WTC11 (cell line): ENCODE measurements at regions of chr2 and their contacts with region 1.

Region 1: DNA sequence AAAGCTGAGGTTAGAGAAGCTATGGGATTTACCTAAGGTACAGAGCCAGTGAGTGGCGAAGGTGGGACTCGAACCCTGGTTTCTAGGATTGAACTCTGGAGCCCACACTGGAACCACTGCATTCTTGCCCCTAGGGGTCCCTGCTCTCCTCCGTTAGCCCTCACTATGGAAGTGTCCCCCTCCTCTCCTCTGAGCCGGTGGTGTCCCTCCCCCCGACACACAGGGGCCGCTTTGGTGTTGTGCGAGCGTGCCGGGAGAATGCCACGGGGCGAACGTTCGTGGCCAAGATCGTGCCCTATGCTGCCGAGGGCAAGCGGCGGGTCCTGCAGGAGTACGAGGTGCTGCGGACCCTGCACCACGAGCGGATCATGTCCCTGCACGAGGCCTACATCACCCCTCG is 8.5 kb upstream of the GMPPA start:
- DNase-seq: peak; percentile 62
- ATAC-seq: peak; percentile 40
- H3K4me3 Mint-ChIP-seq: no peak overlapping the region
- H3K27ac Mint-ChIP-seq: no peak overlapping the region
- H3K4me1 Mint-ChIP-seq: peaks cover 39% of the 10 kb centered on the region
- H3K27me3 Mint-ChIP-seq: peaks cover 37% of the 10 kb centered on the region
- CTCF ChIP-seq: 0 out of 2 replicates have a peak, but pooled peaks have one; percentile 25

Region 2: GRCh38 chr2:219352448-219353023 is 137.7 kb before region 1 on chr2:
- CTCF ChIA-PET with region 1: no interaction called
- POLR2A ChIA-PET with region 1: no interaction called
- DNase-seq: peak; percentile 88
- ATAC-seq: peak; percentile 89
- H3K4me3 Mint-ChIP-seq: no peak overlapping the region
- H3K27ac Mint-ChIP-seq: no peak overlapping the region
- H3K4me1 Mint-ChIP-seq: no peaks in the 10 kb centered on the region
- H3K27me3 Mint-ChIP-seq: peaks cover 53% of the 10 kb centered on the region
- CTCF ChIP-seq: peak; percentile 85

Region 3: DNA sequence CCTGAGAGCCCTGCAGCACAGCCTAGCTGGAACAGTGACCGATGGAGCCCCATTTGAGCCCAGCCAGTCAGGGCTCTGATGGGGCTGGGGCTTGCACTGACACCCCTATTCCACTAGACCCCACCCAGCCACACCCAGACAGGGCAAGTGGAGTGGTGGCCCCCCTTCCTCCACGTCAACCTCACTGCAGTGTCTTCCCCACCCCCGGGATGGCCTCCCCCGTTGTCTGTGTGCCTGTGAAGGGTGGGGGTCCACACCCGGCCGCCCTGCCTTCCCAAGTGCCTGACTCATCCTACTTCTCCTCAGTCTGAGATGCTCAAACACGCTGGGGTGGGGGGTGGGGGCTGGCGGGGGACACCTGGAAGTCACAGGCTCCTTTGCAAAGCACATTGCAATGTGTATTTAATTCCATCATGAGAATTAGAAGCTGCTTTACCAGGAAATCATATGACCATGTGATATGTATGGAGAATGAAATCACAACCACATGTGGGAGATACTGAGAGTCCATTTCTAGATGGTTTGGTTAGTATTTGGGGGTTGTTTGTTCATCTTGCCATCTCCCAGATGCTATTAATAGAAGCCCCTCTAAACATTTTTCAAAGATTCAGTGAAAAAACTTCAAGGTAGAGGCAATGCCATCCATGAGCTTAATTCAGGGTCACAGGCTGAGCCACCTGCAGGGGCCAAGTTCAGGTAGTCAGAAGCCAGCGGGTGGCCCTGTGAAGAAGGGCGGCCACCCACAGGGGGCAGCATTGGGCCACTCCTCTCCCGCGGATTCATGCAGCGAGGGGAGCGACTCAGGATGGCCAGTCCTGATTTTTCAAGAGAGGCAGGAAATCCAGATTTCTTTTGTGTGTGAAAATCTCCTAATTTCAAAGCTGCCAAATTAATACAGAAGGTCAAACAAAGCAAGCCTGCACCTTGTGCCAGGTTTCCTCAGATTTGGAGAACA is 14.2 kb before region 1 on chr2:
- CTCF ChIA-PET with region 1: interaction called, 59 read pairs
- POLR2A ChIA-PET with region 1: interaction called, 5 read pairs
- DNase-seq: peak; percentile 86
- ATAC-seq: peak; percentile 48
- H3K4me3 Mint-ChIP-seq: peak overlapping the region; percentile 68
- H3K27ac Mint-ChIP-seq: peak overlapping the region; percentile 81; the same call in 1 of the 2 replicates
- H3K4me1 Mint-ChIP-seq: peaks cover 24% of the 10 kb centered on the region
- H3K27me3 Mint-ChIP-seq: no peaks in the 10 kb centered on the region; the same call in 1 of the 2 replicates
- CTCF ChIP-seq: peak; percentile 91

Region 4: DNA sequence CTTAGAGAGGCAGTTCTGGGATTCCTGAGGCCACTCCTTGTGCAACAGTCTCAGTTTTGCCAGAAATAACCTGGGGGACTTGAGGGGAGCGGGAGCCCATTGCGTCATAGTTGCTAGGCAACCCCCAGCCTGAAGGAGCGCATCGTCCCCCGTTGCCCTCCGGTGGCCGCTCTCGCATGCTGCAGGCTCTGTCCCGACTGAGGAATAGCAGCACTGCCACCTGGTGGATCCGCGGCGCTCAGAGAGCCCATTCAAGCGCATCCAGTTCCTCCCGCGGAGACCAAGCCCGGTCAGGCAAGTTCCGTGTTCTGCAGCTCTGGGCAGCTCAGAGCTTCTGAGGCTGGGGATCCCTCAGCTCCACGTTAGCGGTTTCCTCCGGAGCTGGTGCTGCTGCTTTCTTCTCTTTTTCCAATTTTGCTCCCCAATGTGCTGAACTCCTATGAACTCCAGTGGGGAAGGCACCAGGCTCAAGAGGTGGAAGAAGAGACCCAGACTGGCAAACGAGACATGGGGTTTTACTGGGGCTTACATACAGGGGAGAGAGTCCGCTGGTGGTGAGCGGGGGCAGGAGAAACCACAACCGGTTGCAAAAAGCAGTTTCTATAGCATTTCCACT is 152.4 kb after region 1 on chr2:
- CTCF ChIA-PET with region 1: no interaction called
- POLR2A ChIA-PET with region 1: no interaction called
- DNase-seq: peak; percentile 99
- ATAC-seq: peak; percentile 91
- H3K4me3 Mint-ChIP-seq: peak overlapping the region; percentile 26; the same call in 1 of the 2 replicates
- H3K27ac Mint-ChIP-seq: no peak overlapping the region
- H3K4me1 Mint-ChIP-seq: peaks cover 27% of the 10 kb centered on the region
- H3K27me3 Mint-ChIP-seq: peaks cover 6% of the 10 kb centered on the region; the same call in 1 of the 2 replicates
- CTCF ChIP-seq: peak; percentile 88

Region 5: GRCh38 chr2:220215785-220216184 is 725.6 kb after region 1 on chr2:
- CTCF ChIA-PET with region 1: no interaction called
- POLR2A ChIA-PET with region 1: no interaction called
- DNase-seq: no peak
- ATAC-seq: no peak
- H3K4me3 Mint-ChIP-seq: no peak overlapping the region
- H3K27ac Mint-ChIP-seq: no peak overlapping the region
- H3K4me1 Mint-ChIP-seq: peaks cover 42% of the 10 kb centered on the region
- H3K27me3 Mint-ChIP-seq: no peaks in the 10 kb centered on the region
- CTCF ChIP-seq: no peak